ENCODE measurements at regions of chr4 and their contacts with region 1.

Region 1: GRCh38 chr4:112284662-112285411 is 867 bp downstream of the TIFA start:
- DNase-seq: peak; percentile 32
- ATAC-seq: no peak
- H3K4me3 Mint-ChIP-seq: peak overlapping the region; percentile 94
- H3K27ac Mint-ChIP-seq: peak overlapping the region; percentile 96
- H3K4me1 Mint-ChIP-seq: peaks cover 74% of the 10 kb centered on the region
- H3K27me3 Mint-ChIP-seq: no peaks in the 10 kb centered on the region
- CTCF ChIP-seq: no peak

Region 2: DNA sequence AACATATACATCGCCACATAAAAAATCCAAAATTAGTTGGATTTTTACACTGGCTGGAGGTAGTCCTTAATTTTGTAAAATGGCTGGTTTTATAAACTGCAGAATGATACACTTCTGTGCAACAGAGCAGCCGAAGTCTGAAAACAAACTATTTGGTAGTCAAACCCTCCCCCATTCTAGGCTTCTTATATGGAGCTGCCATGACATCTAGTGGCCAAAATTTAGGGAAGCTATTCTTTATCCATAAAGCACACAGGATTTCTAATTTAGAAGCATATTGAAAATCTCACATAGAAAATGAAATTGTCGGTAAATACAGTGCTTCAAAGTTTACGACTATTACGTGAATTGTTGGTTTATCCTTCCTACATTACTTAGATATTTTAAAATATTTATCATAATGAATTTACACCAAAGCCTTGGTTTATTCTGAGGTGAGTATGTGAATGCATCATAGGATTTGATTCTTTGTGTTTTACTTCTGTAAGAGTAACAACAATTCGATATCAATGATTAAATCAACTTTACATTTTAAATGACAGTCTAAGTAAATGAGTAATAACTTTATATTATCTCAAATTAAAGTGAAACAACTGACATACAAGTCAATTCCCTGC is 253.0 kb before region 1 on chr4:
- CTCF ChIA-PET with region 1: no interaction called
- POLR2A ChIA-PET with region 1: no interaction called
- intact Hi-C with region 1: no loop called
- DNase-seq: peak; percentile 12
- ATAC-seq: no peak
- H3K4me3 Mint-ChIP-seq: no peak overlapping the region
- H3K27ac Mint-ChIP-seq: no peak overlapping the region
- H3K4me1 Mint-ChIP-seq: no peaks in the 10 kb centered on the region
- H3K27me3 Mint-ChIP-seq: peaks cover 27% of the 10 kb centered on the region
- CTCF ChIP-seq: no peak

Region 3: GRCh38 chr4:112231779-112232713 is 52.8 kb before region 1 on chr4 and contains the start of gene AP1AR:
- CTCF ChIA-PET with region 1: no interaction called
- POLR2A ChIA-PET with region 1: interaction called, 3 read pairs
- intact Hi-C with region 1: loop called (anchors 5 kb)
- DNase-seq: peak; percentile 87
- ATAC-seq: peak; percentile 66
- H3K4me3 Mint-ChIP-seq: peak within 1 kb of the TSS; percentile 93
- H3K27ac Mint-ChIP-seq: peak within 1 kb of the TSS; percentile 95
- H3K4me1 Mint-ChIP-seq: peaks cover 34% of the 10 kb centered on the region
- H3K27me3 Mint-ChIP-seq: peaks cover under 1% of the 10 kb centered on the region
- CTCF ChIP-seq: peak; percentile 13
- total RNA-seq, gene AP1AR: 15.5 to 17.7 TPM

Region 4: DNA sequence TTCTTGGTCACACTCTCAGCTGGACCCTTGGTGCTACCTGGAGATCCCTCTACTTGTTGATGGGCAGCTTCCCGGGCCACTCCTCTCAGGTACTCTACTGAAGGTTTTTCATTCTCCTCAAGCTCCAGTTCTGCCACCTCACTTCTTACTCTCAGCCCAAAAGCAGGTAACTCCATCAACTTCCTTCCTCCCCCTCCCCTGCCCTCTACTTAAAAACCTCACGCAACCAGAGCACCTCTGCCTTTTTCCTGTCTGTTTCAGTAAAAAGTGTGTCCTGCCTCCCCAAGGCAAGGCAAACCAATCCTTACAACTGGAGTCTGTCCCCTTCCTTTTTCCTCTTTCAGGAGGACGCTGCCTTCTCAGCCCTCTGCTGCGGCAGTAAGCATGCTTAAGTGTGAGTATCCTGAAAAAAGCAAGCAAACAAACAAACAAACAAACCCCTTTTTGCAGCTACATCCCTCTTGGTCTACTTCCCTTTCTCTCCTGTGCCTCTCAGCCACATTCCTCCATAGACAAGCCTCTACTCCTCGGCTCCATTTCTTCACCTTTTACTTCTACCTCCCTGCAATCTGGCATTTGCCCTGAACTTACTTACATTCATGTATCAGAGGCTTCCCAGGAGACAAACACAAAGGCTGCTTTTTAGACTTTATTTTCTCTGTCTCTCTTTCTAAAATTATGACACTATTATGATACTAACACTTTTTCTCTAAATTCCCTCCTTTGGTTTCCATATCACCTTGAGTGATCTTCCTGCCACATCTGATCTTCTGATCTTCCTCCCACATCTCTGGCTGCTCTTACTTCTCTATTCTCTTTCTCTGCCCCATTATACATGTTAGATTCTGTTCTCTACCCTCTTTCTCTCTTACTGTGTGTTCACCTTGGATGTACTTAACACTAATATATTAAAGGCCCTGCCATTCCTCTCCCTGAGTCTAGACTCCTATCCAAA is 17.8 kb after region 1 on chr4:
- CTCF ChIA-PET with region 1: interaction called, 6 read pairs
- POLR2A ChIA-PET with region 1: interaction called, 16 read pairs
- intact Hi-C with region 1: no loop called
- DNase-seq: no peak
- ATAC-seq: peak; percentile 74
- H3K4me3 Mint-ChIP-seq: no peak overlapping the region
- H3K27ac Mint-ChIP-seq: no peak overlapping the region
- H3K4me1 Mint-ChIP-seq: peaks cover 30% of the 10 kb centered on the region
- H3K27me3 Mint-ChIP-seq: no peaks in the 10 kb centered on the region
- CTCF ChIP-seq: no peak

Region 5: GRCh38 chr4:112321776-112322684 is 37.2 kb after region 1 on chr4:
- CTCF ChIA-PET with region 1: interaction called, 13 read pairs
- POLR2A ChIA-PET with region 1: interaction called, 6 read pairs
- intact Hi-C with region 1: no loop called
- DNase-seq: peak; percentile 92
- ATAC-seq: peak; percentile 92
- H3K4me3 Mint-ChIP-seq: no peak overlapping the region
- H3K27ac Mint-ChIP-seq: no peak overlapping the region
- H3K4me1 Mint-ChIP-seq: peaks cover 10% of the 10 kb centered on the region
- H3K27me3 Mint-ChIP-seq: no peaks in the 10 kb centered on the region
- CTCF ChIP-seq: peak; percentile 96